Activated naive CD4-positive, alpha-beta T cell treated with anti-CD3 and anti-CD28 coated beads for 36 hours (primary cell): ENCODE measurements at regions of chr3 and their contacts with region 1.

Region 1: DNA sequence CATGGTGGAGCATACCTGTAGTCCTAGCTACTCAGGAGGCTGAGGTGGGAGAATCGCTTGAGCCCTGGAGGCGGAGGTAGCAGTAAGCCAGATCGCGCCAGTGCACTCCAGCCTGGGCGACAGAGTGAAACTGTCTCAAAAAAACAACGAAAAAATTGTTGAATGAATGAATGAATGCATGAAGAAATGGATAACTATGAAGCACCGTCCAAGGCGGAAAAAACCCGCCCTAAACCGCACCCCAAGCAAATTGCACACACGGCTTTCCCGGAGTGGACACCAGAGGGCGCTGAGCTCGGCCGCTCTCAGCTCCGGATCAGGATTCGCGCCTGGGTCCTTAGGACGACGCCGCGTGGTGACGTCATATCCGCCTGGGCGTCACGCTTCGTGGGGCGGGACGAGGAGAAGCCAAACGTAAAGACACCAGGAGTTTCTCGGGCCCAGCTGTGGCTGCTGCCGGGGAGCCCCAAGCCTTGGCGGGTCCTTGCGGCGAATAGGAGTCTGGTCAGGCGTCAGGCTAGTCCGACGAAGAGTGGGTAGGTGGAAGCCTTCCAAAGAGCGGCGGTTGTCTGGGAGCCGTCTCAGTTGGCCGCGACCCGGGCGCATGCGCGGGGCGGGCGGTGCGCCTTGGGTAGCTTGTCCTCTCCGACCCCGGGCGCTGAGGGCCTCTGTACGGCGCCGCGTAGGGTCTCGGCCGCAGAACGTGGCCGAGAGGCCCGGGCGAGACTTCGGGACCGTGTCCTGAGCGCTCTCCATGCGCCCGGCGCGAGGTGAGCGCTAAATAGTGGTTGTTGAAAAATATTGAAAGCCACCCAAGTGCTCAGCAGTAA is at the starts of genes HTD2 and RPP14:
- DNase-seq: peak; percentile 99
- H3K4me3 Mint-ChIP-seq: peak within 1 kb of the TSS; percentile 99
- H3K27ac Mint-ChIP-seq: peak within 1 kb of the TSS; percentile 96
- H3K4me1 Mint-ChIP-seq: peaks cover 26% of the 10 kb centered on the region
- H3K27me3 Mint-ChIP-seq: peaks cover 5% of the 10 kb centered on the region
- total RNA-seq, gene HTD2: 6.9 to 8.1 TPM
- total RNA-seq, gene RPP14: 12.1 to 14.4 TPM

Region 2: GRCh38 chr3:57597122-57597923 is 708.8 kb before region 1 on chr3 and contains the start of gene ARF4:
- CTCF ChIA-PET with region 1: no interaction called
- intact Hi-C with region 1: loop called (anchors 2 kb)
- DNase-seq: peak; percentile 99
- H3K4me3 Mint-ChIP-seq: peak within 1 kb of the TSS; percentile 97
- H3K27ac Mint-ChIP-seq: peak within 1 kb of the TSS; percentile 100
- H3K4me1 Mint-ChIP-seq: peaks cover 46% of the 10 kb centered on the region
- H3K27me3 Mint-ChIP-seq: no peaks in the 10 kb centered on the region
- total RNA-seq, gene ARF4: 49.0 to 50.8 TPM

Region 3: DNA sequence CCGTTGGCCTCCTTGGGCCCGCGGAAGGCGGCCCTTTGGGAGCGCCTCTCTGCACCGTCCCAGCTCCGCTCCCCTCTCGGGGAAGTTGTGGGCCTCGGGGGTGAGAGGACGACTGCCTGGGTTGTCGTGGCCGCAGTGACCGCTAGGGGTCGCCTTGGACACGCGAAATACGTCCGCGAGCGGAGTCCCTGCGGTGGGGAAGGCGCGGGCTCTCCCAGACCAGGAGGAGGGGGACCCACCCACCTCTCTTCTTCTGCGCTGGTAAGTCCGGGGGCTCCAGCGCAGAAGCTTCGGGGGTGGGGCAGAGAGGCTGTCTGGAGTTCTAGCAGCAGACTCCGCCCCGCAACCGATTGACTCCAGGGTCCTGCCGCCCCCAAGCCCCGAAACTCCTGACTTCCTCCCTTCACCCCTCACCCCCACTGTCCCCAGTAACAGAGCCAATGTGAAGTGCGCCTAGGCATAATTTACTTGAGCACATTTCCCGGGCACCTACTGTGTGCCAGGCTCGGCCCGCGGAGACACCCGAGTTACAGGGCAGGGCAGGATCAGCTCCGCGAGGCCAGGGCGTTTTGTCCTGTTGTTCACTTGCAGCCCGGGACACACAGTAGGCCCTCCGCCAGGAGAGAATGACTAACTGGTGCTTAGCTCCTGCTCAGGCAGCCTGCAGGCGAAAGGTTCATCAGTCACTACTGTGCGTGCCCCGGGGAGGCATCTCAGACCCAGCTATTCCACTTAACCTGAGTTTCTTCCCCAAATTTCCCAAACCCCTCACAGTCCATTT is 128.2 kb before region 1 on chr3:
- CTCF ChIA-PET with region 1: interaction called, 14 read pairs
- intact Hi-C with region 1: loop called (anchors 2 kb)
- DNase-seq: peak; percentile 95
- H3K4me3 Mint-ChIP-seq: peak overlapping the region; percentile 59
- H3K27ac Mint-ChIP-seq: no peak overlapping the region
- H3K4me1 Mint-ChIP-seq: peaks cover 13% of the 10 kb centered on the region
- H3K27me3 Mint-ChIP-seq: peaks cover 6% of the 10 kb centered on the region

Region 4: DNA sequence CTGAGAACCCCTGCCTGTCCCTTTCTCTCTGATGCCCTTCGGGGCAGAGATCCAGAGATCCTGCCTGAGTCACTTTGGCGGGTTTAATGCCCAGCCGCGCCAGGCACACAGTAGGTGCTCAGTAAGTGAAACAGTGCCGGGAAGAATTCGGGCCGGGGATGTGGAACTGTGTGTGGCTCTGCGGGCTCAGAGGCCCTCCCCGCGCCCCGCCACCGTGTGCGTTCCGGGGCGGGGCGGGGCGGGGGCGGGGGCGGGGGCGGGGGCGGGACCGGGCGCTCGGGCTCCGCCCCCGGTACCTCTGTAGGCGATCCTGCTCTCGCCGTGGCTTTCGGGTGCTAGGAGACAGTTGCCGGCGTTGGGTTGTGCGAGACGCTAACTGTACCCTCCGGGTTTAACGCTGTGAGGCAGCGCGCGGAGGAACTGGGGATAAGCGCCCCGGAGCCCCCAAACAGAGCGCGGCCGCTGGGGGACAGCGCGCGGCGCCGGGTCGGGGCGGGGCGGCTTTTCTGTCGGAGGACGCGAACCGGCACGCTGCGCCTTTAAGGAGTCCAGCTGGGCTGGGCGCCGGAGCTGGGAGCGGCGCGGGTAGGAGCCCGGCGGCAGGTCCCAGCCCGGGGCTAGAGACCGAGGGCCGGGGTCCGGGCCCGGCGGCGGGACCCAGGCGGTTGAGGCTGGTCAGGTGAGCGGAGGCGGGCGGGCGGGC is 68.7 kb before region 1 on chr3 and contains the start of gene ABHD6:
- CTCF ChIA-PET with region 1: interaction called, 6 read pairs
- intact Hi-C with region 1: loop called (anchors 1 kb)
- DNase-seq: peak; percentile 75
- H3K4me3 Mint-ChIP-seq: peak within 1 kb of the TSS; percentile 86
- H3K27ac Mint-ChIP-seq: peak within 1 kb of the TSS; percentile 46
- H3K4me1 Mint-ChIP-seq: peaks cover 10% of the 10 kb centered on the region
- H3K27me3 Mint-ChIP-seq: peaks cover 6% of the 10 kb centered on the region
- total RNA-seq, gene ABHD6: 1.1 to 1.6 TPM

Region 5: DNA sequence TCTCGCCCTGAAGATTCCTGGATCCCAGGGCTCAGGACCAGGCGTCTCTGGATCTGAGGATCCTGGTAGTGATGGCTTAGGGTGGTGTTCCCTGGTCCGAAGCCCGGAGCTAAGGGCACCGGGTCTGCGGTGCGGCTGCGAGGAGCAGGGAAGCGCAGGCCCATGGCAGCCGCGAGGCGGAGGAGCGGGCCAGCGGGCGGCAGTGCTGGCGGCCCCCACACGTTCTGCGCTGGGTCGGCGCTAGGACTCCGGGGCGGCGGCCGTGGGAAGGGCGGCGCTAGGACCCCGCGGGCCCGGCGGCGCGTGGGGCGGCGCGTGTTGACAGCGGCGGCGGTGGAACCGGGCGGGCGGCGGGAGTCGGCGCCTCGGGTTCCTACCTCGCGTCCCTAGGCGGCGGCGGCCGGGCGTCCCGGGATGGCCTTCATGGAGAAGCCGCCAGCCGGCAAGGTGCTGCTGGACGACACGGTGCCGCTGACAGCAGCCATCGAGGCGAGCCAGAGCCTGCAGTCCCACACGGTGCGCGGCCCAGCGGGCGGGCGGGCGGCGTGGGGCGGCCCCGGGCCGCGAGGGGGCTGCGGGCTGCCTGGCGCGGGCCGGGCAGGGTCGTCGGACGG is 26.6 kb after region 1 on chr3 and contains the start of gene PXK:
- CTCF ChIA-PET with region 1: interaction called, 22 read pairs
- intact Hi-C with region 1: loop called (anchors 1 kb)
- DNase-seq: peak; percentile 77
- H3K4me3 Mint-ChIP-seq: peak within 1 kb of the TSS; percentile 100
- H3K27ac Mint-ChIP-seq: peak within 1 kb of the TSS; percentile 91
- H3K4me1 Mint-ChIP-seq: peaks cover 28% of the 10 kb centered on the region
- H3K27me3 Mint-ChIP-seq: no peaks in the 10 kb centered on the region
- total RNA-seq, gene PXK: 44.7 to 46.1 TPM

Region 6: GRCh38 chr3:58386626-58387365 is 80.7 kb after region 1 on chr3:
- CTCF ChIA-PET with region 1: no interaction called
- intact Hi-C with region 1: no loop called
- DNase-seq: no peak
- H3K4me3 Mint-ChIP-seq: no peak overlapping the region
- H3K27ac Mint-ChIP-seq: no peak overlapping the region
- H3K4me1 Mint-ChIP-seq: no peaks in the 10 kb centered on the region
- H3K27me3 Mint-ChIP-seq: no peaks in the 10 kb centered on the region

Region 7: GRCh38 chr3:58463181-58463941 is 157.3 kb after region 1 on chr3:
- CTCF ChIA-PET with region 1: interaction called, 3 read pairs
- intact Hi-C with region 1: loop called (anchors 1 kb)
- DNase-seq: peak; percentile 92
- H3K4me3 Mint-ChIP-seq: peak overlapping the region; percentile 16
- H3K27ac Mint-ChIP-seq: peak overlapping the region; percentile 61
- H3K4me1 Mint-ChIP-seq: peaks cover 15% of the 10 kb centered on the region
- H3K27me3 Mint-ChIP-seq: peaks cover 3% of the 10 kb centered on the region

Region 8: GRCh38 chr3:58532794-58533220 is 226.7 kb after region 1 on chr3:
- CTCF ChIA-PET with region 1: interaction called, 29 read pairs
- intact Hi-C with region 1: loop called (anchors 1 kb)
- DNase-seq: peak; percentile 90
- H3K4me3 Mint-ChIP-seq: no peak overlapping the region
- H3K27ac Mint-ChIP-seq: peak overlapping the region; percentile 15
- H3K4me1 Mint-ChIP-seq: peaks cover 10% of the 10 kb centered on the region
- H3K27me3 Mint-ChIP-seq: no peaks in the 10 kb centered on the region

Region 9: GRCh38 chr3:59064276-59064675 is 758.2 kb after region 1 on chr3:
- CTCF ChIA-PET with region 1: no interaction called
- intact Hi-C with region 1: no loop called
- DNase-seq: no peak
- H3K4me3 Mint-ChIP-seq: no peak overlapping the region
- H3K27ac Mint-ChIP-seq: no peak overlapping the region
- H3K4me1 Mint-ChIP-seq: no peaks in the 10 kb centered on the region
- H3K27me3 Mint-ChIP-seq: peaks cover 36% of the 10 kb centered on the region